AG04450 (cell line): ENCODE measurements at regions of chr14 and their contacts with region 1.

Region 1: GRCh38 chr14:60331201-60332045 is 82.4 kb downstream of the PPM1A start:
- DNase-seq: no peak
- H3K4me3 ChIP-seq: peak overlapping the region; percentile 46
- H3K27ac ChIP-seq: no peak overlapping the region
- H3K27me3 ChIP-seq: peaks cover 18% of the 10 kb centered on the region
- CTCF ChIP-seq: peak; percentile 76

Region 2: GRCh38 chr14:60508707-60509437 is 177.4 kb after region 1 on chr14 and contains the start of gene SIX6:
- CTCF ChIA-PET with region 1: no interaction called
- POLR2A ChIA-PET with region 1: no interaction called
- DNase-seq: no peak
- H3K4me3 ChIP-seq: no peak within 1 kb of the TSS
- H3K27ac ChIP-seq: no peak within 1 kb of the TSS
- H3K27me3 ChIP-seq: peaks cover 89% of the 10 kb centered on the region
- CTCF ChIP-seq: no peak
- polyA plus RNA-seq, gene SIX6: not detected in 2 replicates

Region 3: GRCh38 chr14:60561845-60562746 is 230.7 kb after region 1 on chr14:
- CTCF ChIA-PET with region 1: interaction called, 11 read pairs
- POLR2A ChIA-PET with region 1: no interaction called
- DNase-seq: peak; percentile 44
- H3K4me3 ChIP-seq: no peak overlapping the region
- H3K27ac ChIP-seq: no peak overlapping the region
- H3K27me3 ChIP-seq: no peaks in the 10 kb centered on the region
- CTCF ChIP-seq: peak; percentile 79